K562 (cell line): ENCODE measurements at regions of chr17 and their contacts with region 1.

Region 1: GRCh38 chr17:49548506-49549310 is 27.0 kb upstream of the NXPH3 start:
- DNase-seq: peak; percentile 57 to 65 (median 62)
- ATAC-seq: peak; percentile 89
- H3K4me3 ChIP-seq: no peak overlapping the region
- H3K27ac ChIP-seq: no peak overlapping the region
- H3K4me1 ChIP-seq: peaks cover 0 to 10% of the 10 kb centered on the region in 2 experiments; a peak in 1 of 5 replicates
- H3K27me3 ChIP-seq: peaks cover 0 to 13% of the 10 kb centered on the region in 2 experiments; a peak in 3 of 5 replicates
- CTCF ChIP-seq: peak; percentile 78 to 89 (median 85)
- EP300 ChIP-seq: no peak
- POLR2A ChIP-seq: no peak
- RAD21 ChIP-seq: peak; percentile 82 to 93

Region 2: GRCh38 chr17:49315551-49316257 is 233.0 kb before region 1 on chr17:
- CTCF ChIA-PET with region 1: interaction called, 10 read pairs
- POLR2A ChIA-PET with region 1: no interaction called
- in situ Hi-C with region 1: no loop called
- intact Hi-C with region 1: no loop called
- DNase-seq: peak; percentile 58 to 75 (median 64)
- ATAC-seq: peak; percentile 93
- H3K4me3 ChIP-seq: no peak overlapping the region
- H3K27ac ChIP-seq: no peak overlapping the region
- H3K4me1 ChIP-seq: no peaks in the 10 kb centered on the region
- H3K27me3 ChIP-seq: no peaks in the 10 kb centered on the region
- CTCF ChIP-seq: peak; percentile 73 to 93 (median 80)
- EP300 ChIP-seq: 0 out of 2 replicates have a peak, but pooled peaks have one; percentile 3
- POLR2A ChIP-seq: no peak
- RAD21 ChIP-seq: peak; percentile 90 to 94

Region 3: GRCh38 chr17:49327835-49328784 is 220.6 kb before region 1 on chr17:
- CTCF ChIA-PET with region 1: no interaction called
- POLR2A ChIA-PET with region 1: no interaction called
- in situ Hi-C with region 1: no loop called
- intact Hi-C with region 1: no loop called
- DNase-seq: peak in 2 of 4 experiments; percentile 21 to 32
- ATAC-seq: peak; percentile 82
- H3K4me3 ChIP-seq: no peak overlapping the region
- H3K27ac ChIP-seq: peak overlapping the region; percentile 61; the same call in 2 of the 3 replicates
- H3K4me1 ChIP-seq: peaks cover 0 to 13% of the 10 kb centered on the region in 2 experiments; a peak in 4 of 5 replicates
- H3K27me3 ChIP-seq: no peaks in the 10 kb centered on the region
- CTCF ChIP-seq: no peak
- EP300 ChIP-seq: peak; percentile 26; the same call in 1 of the 2 replicates
- POLR2A ChIP-seq: no peak
- RAD21 ChIP-seq: no peak

Region 4: GRCh38 chr17:49414622-49415350 is 133.9 kb before region 1 on chr17 and contains the start of gene PHB1:
- CTCF ChIA-PET with region 1: no interaction called
- POLR2A ChIA-PET with region 1: interaction called, 3 read pairs
- in situ Hi-C with region 1: loop called (anchors 5 kb)
- intact Hi-C with region 1: loop called (anchors 2 kb)
- DNase-seq: peak; percentile 96 to 98 (median 97)
- ATAC-seq: peak; percentile 100
- H3K4me3 ChIP-seq: peak within 1 kb of the TSS; percentile 91
- H3K27ac ChIP-seq: peak within 1 kb of the TSS; percentile 66
- H3K4me1 ChIP-seq: peaks cover 0 to 5% of the 10 kb centered on the region in 2 experiments; a peak in 1 of 5 replicates
- H3K27me3 ChIP-seq: no peaks in the 10 kb centered on the region
- CTCF ChIP-seq: no peak; a peak in 1 of 6 replicates
- EP300 ChIP-seq: no peak
- POLR2A ChIP-seq: peak; percentile 91
- RAD21 ChIP-seq: no peak
- polyA plus RNA-seq, gene PHB1: 191 to 412 TPM

Region 5: GRCh38 chr17:49496183-49496866 is 52.4 kb before region 1 on chr17:
- CTCF ChIA-PET with region 1: interaction called, 3 read pairs
- POLR2A ChIA-PET with region 1: no interaction called
- in situ Hi-C with region 1: loop called (anchors 5 kb)
- intact Hi-C with region 1: loop called (anchors 1 kb)
- DNase-seq: peak; percentile 76 to 83 (median 80)
- ATAC-seq: peak; percentile 94
- H3K4me3 ChIP-seq: no peak overlapping the region
- H3K27ac ChIP-seq: no peak overlapping the region
- H3K4me1 ChIP-seq: peaks cover 0 to 31% of the 10 kb centered on the region in 2 experiments; a peak in 2 of 5 replicates
- H3K27me3 ChIP-seq: peaks cover 30 to 62% of the 10 kb centered on the region in 2 experiments
- CTCF ChIP-seq: peak; percentile 65 to 81 (median 67); a peak in 5 of 6 replicates
- EP300 ChIP-seq: no peak
- POLR2A ChIP-seq: no peak
- RAD21 ChIP-seq: peak; percentile 25 to 63; a peak in 3 of 4 replicates

Region 6: DNA sequence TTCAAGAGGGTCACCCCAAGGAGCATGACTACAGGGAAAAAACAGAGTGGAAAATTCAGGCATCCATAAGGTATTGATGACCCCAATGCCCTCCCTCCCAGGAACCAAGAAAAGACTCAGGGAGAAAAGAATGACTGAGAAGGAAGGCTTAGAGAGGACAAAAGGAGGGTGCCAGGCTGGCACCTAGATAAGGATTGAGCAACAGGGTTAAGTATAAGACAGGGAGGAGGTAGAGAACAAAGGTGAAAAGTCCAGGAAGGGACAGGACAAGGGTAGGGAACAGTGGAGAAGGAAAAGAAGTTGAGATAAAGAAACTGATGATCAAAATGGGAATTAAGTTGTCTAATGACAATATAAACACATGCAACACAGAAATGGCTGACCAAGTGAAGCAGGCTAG is 156.5 kb after region 1 on chr17:
- CTCF ChIA-PET with region 1: no interaction called
- POLR2A ChIA-PET with region 1: no interaction called
- in situ Hi-C with region 1: no loop called
- intact Hi-C with region 1: no loop called
- DNase-seq: no peak
- ATAC-seq: no peak
- H3K4me3 ChIP-seq: no peak overlapping the region
- H3K27ac ChIP-seq: no peak overlapping the region
- H3K4me1 ChIP-seq: peaks cover 6 to 18% of the 10 kb centered on the region in 2 experiments; a peak in 4 of 5 replicates
- H3K27me3 ChIP-seq: no peaks in the 10 kb centered on the region
- CTCF ChIP-seq: no peak
- EP300 ChIP-seq: no peak
- POLR2A ChIP-seq: no peak
- RAD21 ChIP-seq: no peak

Region 7: GRCh38 chr17:49739641-49740271 is 191.0 kb after region 1 on chr17:
- CTCF ChIA-PET with region 1: no interaction called
- POLR2A ChIA-PET with region 1: no interaction called
- in situ Hi-C with region 1: no loop called
- intact Hi-C with region 1: no loop called
- DNase-seq: peak; percentile 95 to 100 (median 96)
- ATAC-seq: peak; percentile 92
- H3K4me3 ChIP-seq: peak overlapping the region; percentile 16
- H3K27ac ChIP-seq: peak overlapping the region; percentile 92
- H3K4me1 ChIP-seq: peaks cover 28 to 57% of the 10 kb centered on the region in 2 experiments
- H3K27me3 ChIP-seq: no peaks in the 10 kb centered on the region
- CTCF ChIP-seq: no peak; a peak in 1 of 6 replicates
- EP300 ChIP-seq: peak; percentile 99
- POLR2A ChIP-seq: peak; percentile 56; the same call in 1 of the 2 replicates
- RAD21 ChIP-seq: peak; percentile 11 to 55; a peak in 3 of 4 replicates